Activated T-helper 1 cell treated with anti-CD3 and anti-CD28 coated beads, Interleukin-12 subunit alpha, Interleukin-12 subunit beta, Interleukin-2, Interleukin-4 antibody, amounts not matched to agents 30 ng/mL and 10 ng/mL and 1 ng/mL, durations not matched to agents 14 hours and 24 hours and 36 hours (primary cell): ENCODE measurements at regions of chr11 and their contacts with region 1.

Region 1: GRCh38 chr11:105044921-105045524 is at the start of gene CARD16:
- DNase-seq: peak; percentile 20
- H3K4me3 Mint-ChIP-seq: peak within 1 kb of the TSS; percentile 90
- H3K27ac Mint-ChIP-seq: peak within 1 kb of the TSS; percentile 90
- H3K4me1 Mint-ChIP-seq: peaks cover 63% of the 10 kb centered on the region
- H3K27me3 Mint-ChIP-seq: no peaks in the 10 kb centered on the region
- total RNA-seq, gene CARD16: 9.5 and 10.5 TPM in 2 replicates

Region 2: DNA sequence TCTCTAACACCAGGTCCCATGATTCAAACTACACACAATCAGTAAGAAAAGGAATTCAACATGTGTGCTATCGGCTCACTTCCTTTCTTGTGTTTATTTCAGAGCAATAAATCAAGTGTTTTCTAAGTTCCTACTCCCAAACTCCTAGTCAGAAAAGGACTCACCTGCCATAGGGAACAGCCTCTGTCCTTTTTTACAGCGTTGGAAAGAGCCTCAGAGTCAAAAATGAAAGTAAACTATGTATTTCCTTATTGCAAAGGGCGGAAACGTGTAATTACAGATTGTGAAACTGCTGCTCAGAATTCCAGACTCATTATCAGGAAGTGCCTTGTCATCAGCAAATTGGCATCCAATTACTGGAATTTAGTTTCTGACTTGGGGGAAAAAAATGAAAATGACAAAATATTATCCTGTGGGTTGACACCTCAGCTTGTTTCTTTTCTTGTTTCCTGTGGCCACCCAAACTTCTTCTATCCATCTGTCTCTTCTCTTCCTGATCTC is 76.6 kb before region 1 on chr11 and contains the start of gene CASP4:
- intact Hi-C with region 1: loop called (anchors 5 kb)
- DNase-seq: no peak
- H3K4me3 Mint-ChIP-seq: peak within 1 kb of the TSS; percentile 87
- H3K27ac Mint-ChIP-seq: peak within 1 kb of the TSS; percentile 85
- H3K4me1 Mint-ChIP-seq: peaks cover 50% of the 10 kb centered on the region
- H3K27me3 Mint-ChIP-seq: peaks cover 2% of the 10 kb centered on the region
- total RNA-seq, gene CASP4: 32.9 and 34.0 TPM in 2 replicates

Region 3: DNA sequence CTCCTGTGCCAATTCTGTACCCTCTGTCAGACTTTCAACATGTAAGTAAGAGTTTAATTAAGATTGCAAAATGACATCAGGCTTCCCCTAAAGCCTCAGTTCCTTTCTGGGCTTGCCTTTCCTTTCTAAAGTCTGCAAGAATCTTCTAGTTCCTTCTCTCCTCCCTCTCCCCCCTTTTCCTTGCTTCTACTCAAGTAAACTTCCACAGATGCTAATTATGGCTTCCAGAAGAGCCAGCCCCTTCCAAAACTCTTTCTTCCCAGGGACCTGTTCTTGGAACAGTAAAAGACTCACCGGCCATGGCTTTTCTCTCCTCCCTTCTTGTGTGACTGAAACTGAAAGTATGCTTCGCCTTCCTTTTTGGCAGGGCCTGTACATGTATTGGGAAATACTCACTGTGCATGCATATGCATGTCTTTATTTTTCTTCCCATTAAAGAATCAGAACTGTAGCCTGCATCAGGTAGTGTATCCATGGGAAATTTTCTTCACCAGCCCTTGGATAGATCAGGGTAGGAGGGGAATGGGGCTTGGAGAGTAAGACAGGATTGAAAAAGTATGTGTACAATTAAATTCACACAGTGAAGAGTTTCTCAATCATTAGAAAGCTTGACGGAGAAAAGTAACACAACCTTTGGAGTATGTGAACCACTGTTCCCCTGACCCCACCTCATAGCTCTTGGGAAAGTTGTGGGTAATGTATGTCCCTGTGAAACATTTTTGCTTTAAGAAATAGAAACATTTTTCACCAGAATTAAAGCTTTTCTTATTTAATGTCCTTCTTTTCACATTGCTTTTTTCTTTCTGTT is 10.0 kb before region 1 on chr11 and contains the start of gene CASP1:
- intact Hi-C with region 1: loop called (anchors 1 kb)
- DNase-seq: peak; percentile 31
- H3K4me3 Mint-ChIP-seq: peak within 1 kb of the TSS; percentile 93
- H3K27ac Mint-ChIP-seq: peak within 1 kb of the TSS; percentile 94
- H3K4me1 Mint-ChIP-seq: peaks cover 32% of the 10 kb centered on the region
- H3K27me3 Mint-ChIP-seq: no peaks in the 10 kb centered on the region
- total RNA-seq, gene CASP1: 21.1 and 21.4 TPM in 2 replicates

Region 4: GRCh38 chr11:105081412-105082087 is 36.5 kb after region 1 on chr11:
- intact Hi-C with region 1: loop called (anchors 1 kb)
- DNase-seq: no peak
- H3K4me3 Mint-ChIP-seq: no peak overlapping the region
- H3K27ac Mint-ChIP-seq: no peak overlapping the region
- H3K4me1 Mint-ChIP-seq: peaks cover 28% of the 10 kb centered on the region
- H3K27me3 Mint-ChIP-seq: peaks cover 14% of the 10 kb centered on the region

Region 5: DNA sequence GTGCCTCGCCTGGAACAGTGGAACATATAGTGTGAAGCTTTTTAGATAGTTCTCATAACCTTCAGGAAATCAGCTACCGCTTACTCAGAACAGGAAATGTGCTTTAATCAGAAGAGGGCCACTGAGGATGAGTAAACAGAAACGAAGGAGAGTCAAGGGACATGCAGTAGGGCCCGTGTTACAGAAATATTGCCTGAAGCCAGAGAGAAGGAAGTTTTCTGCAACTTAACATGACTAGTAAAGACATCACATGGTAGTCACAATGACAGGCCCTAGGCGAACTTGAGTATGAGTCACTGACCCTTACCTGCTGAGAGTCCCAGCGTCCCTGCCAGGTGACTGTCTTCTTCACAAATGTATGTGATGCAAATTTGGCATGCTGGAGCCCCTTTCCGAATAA is 55.2 kb after region 1 on chr11:
- intact Hi-C with region 1: loop called (anchors 1 kb)
- DNase-seq: no peak
- H3K4me3 Mint-ChIP-seq: peak overlapping the region; percentile 90
- H3K27ac Mint-ChIP-seq: peak overlapping the region; percentile 95
- H3K4me1 Mint-ChIP-seq: peaks cover 33% of the 10 kb centered on the region
- H3K27me3 Mint-ChIP-seq: peaks cover 1% of the 10 kb centered on the region